Colonic mucosa (tissue), 4 donors: ENCODE measurements at regions of chr4 and their contacts with region 1.

Region 1: GRCh38 chr4:77697860-77698590 is 92.4 kb downstream of the CXCL13 start:
- DNase-seq: peak; percentile 63
- H3K4me3 ChIP-seq: no peak overlapping the region
- H3K27ac ChIP-seq: no peak overlapping the region
- H3K4me1 ChIP-seq: no peaks in the 10 kb centered on the region
- H3K27me3 ChIP-seq: no peaks in the 10 kb centered on the region
- CTCF ChIP-seq: peak; percentile 48

Region 2: DNA sequence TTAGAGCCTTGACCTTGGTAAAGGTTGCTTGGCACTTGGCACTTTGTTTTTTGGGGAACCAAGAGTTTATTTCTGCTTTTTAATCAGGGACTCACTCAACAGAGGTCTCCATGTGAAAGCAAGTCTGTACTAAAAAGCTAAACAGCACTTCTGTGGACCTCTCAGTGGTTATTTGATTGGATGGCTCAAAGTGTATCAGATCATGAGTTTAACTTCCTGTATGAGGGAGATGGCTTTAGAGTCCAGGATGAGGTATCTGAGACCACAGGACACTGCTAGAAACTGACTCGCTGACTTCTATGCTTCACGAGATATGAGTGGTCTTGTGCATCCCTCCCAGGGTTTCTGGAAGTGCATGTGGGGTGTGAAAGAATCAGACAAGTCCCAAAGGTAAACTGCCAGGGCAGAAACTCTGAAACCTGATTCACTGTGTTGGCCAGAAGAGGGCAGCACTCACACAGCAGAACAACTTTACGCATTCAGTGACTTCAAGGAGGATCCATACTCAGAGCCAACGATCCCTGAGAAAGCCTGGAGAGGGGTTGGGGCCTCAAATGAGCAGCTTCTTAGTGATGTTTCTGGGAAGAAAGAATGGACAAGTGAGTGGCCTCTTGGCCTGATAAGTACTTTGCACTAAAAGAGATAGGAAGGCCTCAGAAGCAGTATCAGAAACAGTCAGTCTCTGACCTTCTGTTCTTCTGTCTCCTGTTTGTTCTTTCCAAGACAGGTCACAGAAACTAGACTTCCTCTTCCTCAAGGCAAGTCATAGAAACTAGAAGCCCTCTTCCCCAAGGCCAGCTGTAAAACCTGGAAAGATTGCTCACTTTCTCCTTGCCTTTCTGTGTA is 312.7 kb before region 1 on chr4:
- intact Hi-C with region 1: loop called (anchors 5 kb)
- DNase-seq: peak; percentile 64
- H3K4me3 ChIP-seq: no peak overlapping the region
- H3K27ac ChIP-seq: no peak overlapping the region
- H3K4me1 ChIP-seq: no peaks in the 10 kb centered on the region
- H3K27me3 ChIP-seq: no peaks in the 10 kb centered on the region
- CTCF ChIP-seq: peak; percentile 80

Region 3: DNA sequence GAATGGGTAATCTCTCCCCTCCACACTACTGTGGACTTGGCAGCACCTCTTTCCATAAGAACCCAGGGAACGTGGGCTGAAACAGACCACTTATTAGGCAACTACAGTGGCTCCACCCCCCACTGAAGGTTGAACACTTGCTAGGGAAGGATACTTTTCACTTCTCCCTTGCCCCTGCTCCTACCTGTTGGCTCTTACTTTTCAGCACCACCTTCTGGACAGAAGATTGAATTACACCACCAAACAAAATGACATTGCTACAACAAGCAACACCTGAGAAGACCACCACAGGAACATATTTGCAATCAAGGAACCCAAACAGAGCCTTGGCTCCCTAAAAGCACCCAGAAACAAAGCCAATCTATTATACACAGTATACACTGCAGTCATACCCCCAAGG is 224.5 kb before region 1 on chr4:
- intact Hi-C with region 1: loop called (anchors 10 kb)
- DNase-seq: no peak
- H3K4me3 ChIP-seq: no peak overlapping the region
- H3K27ac ChIP-seq: no peak overlapping the region
- H3K4me1 ChIP-seq: no peaks in the 10 kb centered on the region
- H3K27me3 ChIP-seq: no peaks in the 10 kb centered on the region
- CTCF ChIP-seq: peak; percentile 17

Region 4: GRCh38 chr4:77618383-77619122 is 79.5 kb before region 1 on chr4:
- intact Hi-C with region 1: loop called (anchors 5 kb)
- DNase-seq: peak; percentile 83
- H3K4me3 ChIP-seq: no peak overlapping the region
- H3K27ac ChIP-seq: no peak overlapping the region
- H3K4me1 ChIP-seq: no peaks in the 10 kb centered on the region
- H3K27me3 ChIP-seq: no peaks in the 10 kb centered on the region
- CTCF ChIP-seq: peak; percentile 82

Region 5: GRCh38 chr4:77797239-77797638 is 99.2 kb after region 1 on chr4:
- intact Hi-C with region 1: no loop called
- DNase-seq: no peak
- H3K4me3 ChIP-seq: no peak overlapping the region
- H3K27ac ChIP-seq: no peak overlapping the region
- H3K4me1 ChIP-seq: peaks cover 8% of the 10 kb centered on the region
- H3K27me3 ChIP-seq: no peaks in the 10 kb centered on the region
- CTCF ChIP-seq: no peak

Region 6: GRCh38 chr4:77881460-77882278 is 183.6 kb after region 1 on chr4:
- intact Hi-C with region 1: no loop called
- DNase-seq: peak; percentile 35
- H3K4me3 ChIP-seq: no peak overlapping the region
- H3K27ac ChIP-seq: peak overlapping the region; percentile 29
- H3K4me1 ChIP-seq: no peaks in the 10 kb centered on the region
- H3K27me3 ChIP-seq: no peaks in the 10 kb centered on the region
- CTCF ChIP-seq: no peak

Region 7: DNA sequence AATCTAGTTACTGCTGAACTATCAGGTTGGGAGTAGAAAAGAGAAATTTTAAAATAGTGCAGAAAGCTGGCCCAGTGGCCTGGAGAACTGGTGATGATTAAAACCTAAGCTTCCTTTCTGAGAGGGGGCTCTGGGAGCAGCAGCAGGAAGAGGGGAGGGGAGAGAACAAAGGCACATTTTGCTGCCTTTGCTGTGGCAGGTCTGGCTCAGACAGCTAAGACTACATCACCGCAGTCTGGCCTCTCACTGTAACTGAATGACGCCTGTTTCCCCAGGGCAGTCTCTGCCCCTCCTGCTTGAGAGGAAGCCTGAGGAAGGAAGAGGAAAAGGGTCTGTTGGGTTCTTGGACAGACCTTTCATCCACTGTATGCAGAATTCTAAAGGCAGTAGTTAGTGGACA is 507.6 kb after region 1 on chr4:
- intact Hi-C with region 1: no loop called
- DNase-seq: no peak
- H3K4me3 ChIP-seq: no peak overlapping the region
- H3K27ac ChIP-seq: no peak overlapping the region
- H3K4me1 ChIP-seq: no peaks in the 10 kb centered on the region
- H3K27me3 ChIP-seq: no peaks in the 10 kb centered on the region
- CTCF ChIP-seq: no peak